ENCODE measurements at regions of chr18 and their contacts with region 1.

Region 1: DNA sequence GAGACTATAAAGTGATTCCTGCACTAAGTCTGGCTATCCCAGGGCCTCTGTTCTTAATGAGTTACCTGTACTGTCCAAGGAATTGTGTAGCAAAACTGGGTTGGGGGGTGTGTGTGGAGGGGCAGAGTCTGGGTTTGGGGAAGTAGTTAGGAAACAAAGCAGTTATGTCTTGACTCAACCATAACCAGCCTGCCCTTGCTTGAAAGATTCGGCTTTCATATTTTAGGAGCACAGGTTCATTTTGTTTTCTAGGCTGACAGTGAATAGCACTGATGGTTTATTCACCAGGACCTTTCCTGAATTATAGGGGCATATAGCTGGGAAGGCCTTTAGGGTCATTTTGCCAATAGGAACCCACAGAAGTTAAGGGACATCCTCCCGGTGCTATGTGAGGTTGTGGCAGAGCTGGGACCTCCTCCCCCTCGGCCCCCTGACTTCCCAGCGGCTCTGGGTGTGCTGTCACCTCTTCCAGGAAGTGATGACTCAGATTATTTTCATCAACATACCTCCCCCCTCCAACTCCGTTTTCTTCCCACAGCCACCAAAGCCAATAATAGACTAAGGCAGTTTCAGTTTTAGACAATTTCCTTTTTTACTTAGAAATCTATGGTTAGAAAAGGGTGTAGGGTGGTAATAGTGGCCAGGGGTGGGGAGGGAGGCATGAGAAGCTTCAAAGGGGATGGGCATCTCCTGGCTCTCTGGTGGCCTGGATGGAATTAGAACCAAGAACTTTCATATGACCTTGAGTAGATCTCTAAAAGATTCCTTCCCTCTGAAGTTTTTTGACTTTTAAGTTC is 44.8 kb downstream of the SETBP1 start:
- DNase-seq: peak; percentile 80
- H3K4me3 Mint-ChIP-seq: peak overlapping the region; percentile 33
- H3K27ac Mint-ChIP-seq: peak overlapping the region; percentile 88
- H3K4me1 Mint-ChIP-seq: peaks cover 95% of the 10 kb centered on the region
- H3K27me3 Mint-ChIP-seq: peaks cover 2% of the 10 kb centered on the region

Region 2: DNA sequence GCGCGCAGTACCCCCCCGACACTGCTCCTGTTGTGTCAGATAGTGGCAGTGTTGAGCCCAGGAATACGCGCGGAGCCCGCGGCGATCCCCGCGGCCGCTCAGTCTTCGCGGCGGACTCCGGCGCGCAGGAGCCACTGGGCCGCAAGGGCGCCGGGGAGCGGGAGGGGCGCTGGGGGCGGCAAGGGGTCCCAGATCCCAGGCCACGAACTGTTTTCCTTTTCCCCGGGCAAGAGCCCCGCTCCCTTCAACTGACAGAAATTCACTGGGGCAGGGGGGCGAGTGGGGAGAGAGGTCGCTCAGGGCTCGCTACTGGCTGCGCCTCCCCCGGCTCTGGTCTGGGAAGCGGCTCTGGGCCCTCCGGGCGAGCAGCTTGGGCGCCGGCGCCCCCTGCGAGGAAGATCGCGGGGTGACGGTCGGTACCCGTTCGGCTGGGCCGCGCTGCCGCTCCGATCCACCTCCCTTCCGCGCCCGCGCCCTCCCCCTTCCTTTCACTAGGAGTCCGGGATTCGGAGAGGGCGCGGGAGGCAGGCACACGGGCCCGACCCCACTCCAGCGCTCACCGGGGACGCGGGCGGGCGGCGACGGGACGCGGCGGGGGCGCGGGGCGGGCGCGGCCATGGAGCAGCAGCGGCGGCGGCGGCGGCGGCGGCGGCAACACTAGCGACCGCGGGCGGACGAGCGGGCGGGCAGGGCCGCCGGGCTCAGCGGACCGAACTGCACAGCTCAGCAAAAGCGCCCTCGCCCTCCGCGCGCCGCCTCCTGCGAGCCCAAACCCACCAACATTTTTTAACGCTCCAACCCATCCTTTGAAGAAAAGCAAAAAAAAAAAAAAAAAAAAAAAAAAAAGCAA is 46.2 kb before region 1 on chr18:
- CTCF ChIA-PET with region 1: interaction called, 8 read pairs
- POLR2A ChIA-PET with region 1: interaction called, 43 read pairs
- DNase-seq: peak; percentile 85
- H3K4me3 Mint-ChIP-seq: no peak overlapping the region
- H3K27ac Mint-ChIP-seq: no peak overlapping the region
- H3K4me1 Mint-ChIP-seq: peaks cover 17% of the 10 kb centered on the region
- H3K27me3 Mint-ChIP-seq: peaks cover 37% of the 10 kb centered on the region

Region 3: GRCh38 chr18:44715245-44715644 is 10.3 kb before region 1 on chr18:
- CTCF ChIA-PET with region 1: interaction called, 8 read pairs
- POLR2A ChIA-PET with region 1: interaction called, 81 read pairs
- DNase-seq: no peak
- H3K4me3 Mint-ChIP-seq: no peak overlapping the region
- H3K27ac Mint-ChIP-seq: no peak overlapping the region
- H3K4me1 Mint-ChIP-seq: peaks cover 79% of the 10 kb centered on the region
- H3K27me3 Mint-ChIP-seq: peaks cover 10% of the 10 kb centered on the region

Region 4: GRCh38 chr18:44758861-44759631 is 33.5 kb after region 1 on chr18:
- CTCF ChIA-PET with region 1: no interaction called
- POLR2A ChIA-PET with region 1: interaction called, 53 read pairs
- DNase-seq: peak; percentile 37
- H3K4me3 Mint-ChIP-seq: peak overlapping the region; percentile 71
- H3K27ac Mint-ChIP-seq: peak overlapping the region; percentile 98
- H3K4me1 Mint-ChIP-seq: peaks cover 26% of the 10 kb centered on the region
- H3K27me3 Mint-ChIP-seq: peaks cover 2% of the 10 kb centered on the region